ENCODE measurements at regions of chr2 and their contacts with region 1.

Region 1: GRCh38 chr2:186256540-186256939 is 229.5 kb upstream of the ZC3H15 start:
- DNase-seq: peak; percentile 43
- H3K4me3 ChIP-seq: no peak overlapping the region
- H3K27ac ChIP-seq: no peak overlapping the region
- H3K4me1 ChIP-seq: no peaks in the 10 kb centered on the region
- H3K27me3 ChIP-seq: no peaks in the 10 kb centered on the region
- CTCF ChIP-seq: peak; percentile 41 to 63

Region 2: DNA sequence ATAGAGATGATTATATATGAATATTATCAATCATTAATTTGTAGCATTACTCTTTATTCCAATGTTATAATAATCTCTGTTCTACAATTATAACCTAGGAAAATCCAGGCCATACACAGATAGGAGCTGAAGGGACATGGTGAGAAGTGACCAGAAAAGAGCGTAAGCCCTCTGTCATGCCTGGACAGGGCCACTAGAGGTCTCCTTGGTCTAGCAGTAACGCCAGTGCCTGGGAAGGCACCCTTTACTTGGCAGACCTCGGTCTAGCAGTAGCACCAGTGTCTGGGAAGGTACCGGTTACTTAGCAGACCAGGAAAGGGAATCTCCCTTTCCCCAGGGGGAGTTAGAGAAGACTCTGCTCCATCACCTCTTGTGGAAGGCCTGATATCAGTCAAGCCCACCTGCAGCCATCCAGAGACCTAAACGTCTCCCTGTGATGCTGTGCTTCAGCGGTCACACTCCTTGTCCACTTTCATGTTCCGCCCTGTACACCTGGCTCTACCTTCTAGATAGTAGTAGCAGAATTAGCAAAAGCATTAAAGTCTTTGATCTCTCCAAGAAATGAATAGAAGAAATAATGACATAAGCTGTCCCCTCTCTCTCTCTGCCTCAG is 965.4 kb before region 1 on chr2:
- CTCF ChIA-PET with region 1: no interaction called
- dilution Hi-C with region 1: no loop called
- in situ Hi-C with region 1: no loop called
- intact Hi-C with region 1: loop called (anchors 1 kb)
- DNase-seq: peak; percentile 53
- H3K4me3 ChIP-seq: no peak overlapping the region
- H3K27ac ChIP-seq: no peak overlapping the region
- H3K4me1 ChIP-seq: no peaks in the 10 kb centered on the region
- H3K27me3 ChIP-seq: no peaks in the 10 kb centered on the region
- CTCF ChIP-seq: peak; percentile 74 to 90

Region 3: GRCh38 chr2:185608799-185609198 is 647.7 kb before region 1 on chr2:
- CTCF ChIA-PET with region 1: no interaction called
- dilution Hi-C with region 1: no loop called
- in situ Hi-C with region 1: no loop called
- intact Hi-C with region 1: loop called (anchors 2 kb)
- DNase-seq: no peak
- H3K4me3 ChIP-seq: no peak overlapping the region
- H3K27ac ChIP-seq: no peak overlapping the region
- H3K4me1 ChIP-seq: no peaks in the 10 kb centered on the region
- H3K27me3 ChIP-seq: no peaks in the 10 kb centered on the region
- CTCF ChIP-seq: peak; percentile 29 to 52

Region 4: DNA sequence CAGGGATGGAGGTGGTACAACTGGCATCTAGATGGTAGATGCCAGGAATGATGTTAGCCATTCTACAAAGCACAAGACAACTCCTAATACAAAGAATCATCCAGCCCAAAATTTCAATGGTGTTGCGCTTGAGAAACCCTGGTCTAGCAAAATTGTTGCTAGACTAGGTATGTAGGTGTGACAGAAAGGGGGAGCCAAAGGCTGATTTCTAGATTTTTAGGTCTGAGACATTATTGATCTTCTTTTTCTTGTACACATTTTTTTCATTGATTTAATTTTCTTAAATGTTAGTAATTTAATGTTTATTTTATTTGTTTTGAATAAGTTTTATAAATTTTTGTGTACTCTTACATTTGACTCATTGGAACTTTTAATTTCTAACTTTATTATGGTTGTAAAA is 301.5 kb before region 1 on chr2:
- CTCF ChIA-PET with region 1: no interaction called
- dilution Hi-C with region 1: no loop called
- in situ Hi-C with region 1: no loop called
- intact Hi-C with region 1: loop called (anchors 1 kb)
- DNase-seq: no peak
- H3K4me3 ChIP-seq: no peak overlapping the region
- H3K27ac ChIP-seq: no peak overlapping the region
- H3K4me1 ChIP-seq: no peaks in the 10 kb centered on the region
- H3K27me3 ChIP-seq: no peaks in the 10 kb centered on the region
- CTCF ChIP-seq: no peak

Region 5: DNA sequence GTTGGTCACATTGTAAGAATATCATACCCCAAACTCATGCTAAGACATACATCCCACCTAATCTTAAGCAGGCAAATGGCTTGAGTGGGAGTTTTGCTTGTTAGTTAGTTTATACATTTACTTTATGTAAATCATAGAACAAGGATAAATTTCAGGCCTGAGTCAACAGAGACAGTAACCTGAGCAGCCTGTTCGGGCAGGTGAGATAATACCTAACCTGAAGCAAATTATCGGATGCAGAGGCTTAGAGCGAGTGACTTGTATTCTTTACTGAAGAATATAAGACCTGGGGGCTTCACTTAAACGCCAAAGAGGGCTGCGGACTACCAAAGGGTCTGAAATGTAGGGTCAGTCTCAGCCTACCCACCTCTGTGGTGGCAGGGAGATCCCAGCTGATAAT is 40.0 kb before region 1 on chr2:
- CTCF ChIA-PET with region 1: no interaction called
- dilution Hi-C with region 1: no loop called
- in situ Hi-C with region 1: no loop called
- intact Hi-C with region 1: no loop called
- DNase-seq: no peak
- H3K4me3 ChIP-seq: no peak overlapping the region
- H3K27ac ChIP-seq: no peak overlapping the region
- H3K4me1 ChIP-seq: no peaks in the 10 kb centered on the region
- H3K27me3 ChIP-seq: no peaks in the 10 kb centered on the region
- CTCF ChIP-seq: no peak

Region 6: GRCh38 chr2:186308347-186308746 is 51.8 kb after region 1 on chr2:
- CTCF ChIA-PET with region 1: no interaction called
- dilution Hi-C with region 1: no loop called
- in situ Hi-C with region 1: no loop called
- intact Hi-C with region 1: no loop called
- DNase-seq: peak; percentile 59
- H3K4me3 ChIP-seq: no peak overlapping the region
- H3K27ac ChIP-seq: no peak overlapping the region
- H3K4me1 ChIP-seq: peaks cover 3% of the 10 kb centered on the region
- H3K27me3 ChIP-seq: no peaks in the 10 kb centered on the region
- CTCF ChIP-seq: no peak